Activated naive CD4-positive, alpha-beta T cell treated with anti-CD3 and anti-CD28 coated beads for 36 hours (primary cell): ENCODE measurements at regions of chr3 and their contacts with region 1.

Region 1: DNA sequence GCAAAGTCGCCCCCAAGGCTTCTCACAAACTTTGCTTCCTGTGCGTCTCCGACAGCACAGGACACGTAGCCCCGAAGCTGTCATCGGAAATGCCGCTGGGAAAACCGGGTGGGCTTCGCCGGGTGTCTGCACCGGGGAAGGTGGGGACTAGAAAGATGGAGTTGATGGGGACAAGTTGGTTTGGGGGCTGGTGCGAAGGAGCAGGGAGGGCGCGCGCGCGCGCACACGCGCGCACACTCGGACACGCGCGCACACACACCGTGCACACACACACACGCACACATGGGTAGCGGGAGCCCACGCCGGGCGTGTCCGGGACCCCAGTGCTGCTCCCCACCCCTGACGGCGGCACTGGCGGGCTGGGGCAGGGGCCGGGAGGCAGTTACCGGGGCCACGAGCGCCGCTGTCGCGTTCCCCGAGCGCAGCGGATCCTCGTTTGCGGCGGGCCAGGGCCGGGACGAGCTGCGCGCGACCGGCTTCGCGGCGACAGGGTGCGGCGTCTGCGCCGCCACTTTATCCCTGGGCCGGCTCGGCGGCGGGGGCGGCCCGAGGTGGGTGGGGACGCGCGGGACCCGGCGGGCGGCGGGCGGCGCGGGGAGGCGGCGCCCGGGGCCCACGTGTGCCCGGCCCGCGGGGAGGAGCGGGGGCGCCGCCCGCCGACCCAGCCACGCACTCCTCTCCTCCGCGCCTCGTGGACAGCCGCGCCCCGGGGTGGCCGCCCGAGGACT is 547 bp upstream of the MGLL start:
- DNase-seq: peak; percentile 8
- H3K4me3 Mint-ChIP-seq: peak overlapping the region; percentile 68
- H3K27ac Mint-ChIP-seq: no peak overlapping the region
- H3K4me1 Mint-ChIP-seq: peaks cover 4% of the 10 kb centered on the region
- H3K27me3 Mint-ChIP-seq: peaks cover 59% of the 10 kb centered on the region

Region 2: DNA sequence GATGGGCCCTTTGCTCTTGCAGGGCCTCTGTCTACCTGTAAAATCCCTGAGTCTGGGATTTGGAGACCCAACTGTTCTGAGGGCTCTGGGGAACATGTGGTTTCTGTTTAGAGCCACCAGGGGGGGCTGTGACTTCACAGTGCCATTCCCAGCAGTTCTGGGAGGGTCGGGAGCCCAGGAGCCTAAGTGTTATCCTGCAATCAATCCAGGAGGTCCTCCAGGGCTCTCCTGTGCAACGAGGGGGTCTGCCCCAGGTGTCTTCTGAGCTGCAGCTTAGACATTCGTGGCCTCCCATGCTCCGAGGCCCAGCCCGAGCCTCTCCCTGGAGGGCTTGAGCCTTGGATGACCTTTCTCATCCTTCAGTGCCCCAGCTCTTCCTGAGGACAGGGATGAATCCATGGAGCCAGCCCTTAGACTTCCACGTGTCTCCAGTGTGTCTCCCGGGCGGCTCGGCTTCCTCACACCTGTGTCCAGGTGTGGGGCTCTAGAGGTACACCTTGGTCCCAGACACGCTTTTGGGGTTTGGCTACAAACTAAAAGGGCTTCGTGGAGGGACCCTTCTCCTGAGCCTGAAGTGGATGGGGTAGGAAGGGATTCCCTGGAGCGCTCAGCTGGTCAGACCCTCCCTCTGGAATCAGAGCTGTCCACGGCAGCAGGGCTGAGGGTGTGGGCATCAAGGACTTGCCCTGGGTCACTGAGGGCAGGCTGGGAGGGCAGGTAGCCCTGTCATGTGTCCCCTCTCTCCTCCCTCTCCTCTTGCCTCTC is 170.4 kb before region 1 on chr3:
- CTCF ChIA-PET with region 1: no interaction called
- intact Hi-C with region 1: loop called (anchors 5 kb)
- DNase-seq: no peak
- H3K4me3 Mint-ChIP-seq: no peak overlapping the region
- H3K27ac Mint-ChIP-seq: no peak overlapping the region
- H3K4me1 Mint-ChIP-seq: no peaks in the 10 kb centered on the region
- H3K27me3 Mint-ChIP-seq: no peaks in the 10 kb centered on the region